ENCODE measurements at regions of chr1 and their contacts with region 1.

Region 1: DNA sequence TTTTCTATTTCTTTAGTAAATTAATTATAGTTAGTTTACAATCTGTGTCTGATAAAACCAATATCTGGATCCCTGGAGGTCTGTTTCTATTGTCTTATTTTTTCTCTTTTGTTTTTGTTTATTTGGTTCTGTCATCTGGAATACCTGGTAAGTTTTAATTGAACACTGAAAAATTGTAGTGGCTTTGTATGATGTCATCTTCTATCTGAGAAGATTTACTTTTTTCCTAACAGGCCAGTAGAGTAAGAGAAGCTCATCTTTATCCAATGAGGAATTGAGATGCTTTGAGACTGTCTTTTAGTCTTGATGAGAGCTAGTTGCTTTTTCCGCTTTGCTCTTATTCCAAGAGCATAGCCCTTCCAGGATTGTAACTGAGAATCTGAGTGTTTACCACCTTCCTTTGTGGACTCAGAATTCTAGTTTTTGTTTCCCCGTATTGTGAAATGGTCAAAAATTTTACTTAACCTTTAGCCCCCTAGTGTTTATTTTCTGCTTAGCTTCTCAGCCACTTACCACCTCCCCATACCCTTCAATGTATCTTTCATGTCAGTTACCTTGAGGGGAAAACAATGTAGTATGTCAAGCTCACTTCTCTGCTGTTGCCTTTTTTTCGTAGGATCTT is 25.0 kb downstream of the PTGFRN start:
- DNase-seq: no peak
- ATAC-seq: no peak
- H3K4me3 Mint-ChIP-seq: no peak overlapping the region
- H3K27ac Mint-ChIP-seq: peak overlapping the region; percentile 77
- H3K4me1 Mint-ChIP-seq: peaks cover 7% of the 10 kb centered on the region
- H3K27me3 Mint-ChIP-seq: no peaks in the 10 kb centered on the region

Region 2: DNA sequence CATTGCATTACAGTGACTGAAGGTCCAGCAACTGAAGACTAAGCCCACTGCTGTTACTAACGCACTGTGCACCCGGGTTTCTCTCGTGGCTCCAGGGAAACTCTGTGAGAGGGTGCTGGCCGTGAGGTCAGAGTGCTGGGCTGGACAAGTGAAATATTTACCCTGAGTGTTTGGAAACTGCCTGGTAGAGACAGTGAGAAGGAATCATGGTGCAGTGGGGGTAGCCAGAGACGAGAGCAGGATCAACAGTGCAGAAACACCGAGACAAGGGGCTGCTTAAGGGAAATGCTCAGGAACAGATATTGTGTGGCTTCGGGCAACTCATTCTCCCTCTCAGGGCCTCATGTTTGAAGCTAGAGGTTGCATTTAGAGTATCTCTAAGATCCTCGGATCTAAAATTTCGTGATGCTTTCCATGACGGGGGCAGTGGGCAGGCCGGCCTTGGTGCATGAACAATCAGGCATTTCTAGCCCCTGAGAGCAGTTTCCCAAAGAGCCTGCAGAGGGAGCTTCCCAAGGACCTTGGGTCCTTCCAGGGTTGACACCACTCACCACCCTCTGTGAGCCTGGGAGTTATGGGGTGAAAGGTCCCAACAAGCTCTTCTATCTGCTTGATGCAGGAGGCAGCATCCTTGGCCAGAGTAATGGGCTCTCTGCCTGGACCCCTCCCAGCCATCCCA is 170.8 kb before region 1 on chr1:
- CTCF ChIA-PET with region 1: interaction called, 3 read pairs
- POLR2A ChIA-PET with region 1: interaction called, 5 read pairs
- intact Hi-C with region 1: loop called in 1 of 2 experiments (anchors 5 kb)
- DNase-seq: peak; percentile 83
- ATAC-seq: peak; percentile 6
- H3K4me3 Mint-ChIP-seq: peak overlapping the region; percentile 93
- H3K27ac Mint-ChIP-seq: peak overlapping the region; percentile 100
- H3K4me1 Mint-ChIP-seq: peaks cover 92% of the 10 kb centered on the region
- H3K27me3 Mint-ChIP-seq: no peaks in the 10 kb centered on the region

Region 3: DNA sequence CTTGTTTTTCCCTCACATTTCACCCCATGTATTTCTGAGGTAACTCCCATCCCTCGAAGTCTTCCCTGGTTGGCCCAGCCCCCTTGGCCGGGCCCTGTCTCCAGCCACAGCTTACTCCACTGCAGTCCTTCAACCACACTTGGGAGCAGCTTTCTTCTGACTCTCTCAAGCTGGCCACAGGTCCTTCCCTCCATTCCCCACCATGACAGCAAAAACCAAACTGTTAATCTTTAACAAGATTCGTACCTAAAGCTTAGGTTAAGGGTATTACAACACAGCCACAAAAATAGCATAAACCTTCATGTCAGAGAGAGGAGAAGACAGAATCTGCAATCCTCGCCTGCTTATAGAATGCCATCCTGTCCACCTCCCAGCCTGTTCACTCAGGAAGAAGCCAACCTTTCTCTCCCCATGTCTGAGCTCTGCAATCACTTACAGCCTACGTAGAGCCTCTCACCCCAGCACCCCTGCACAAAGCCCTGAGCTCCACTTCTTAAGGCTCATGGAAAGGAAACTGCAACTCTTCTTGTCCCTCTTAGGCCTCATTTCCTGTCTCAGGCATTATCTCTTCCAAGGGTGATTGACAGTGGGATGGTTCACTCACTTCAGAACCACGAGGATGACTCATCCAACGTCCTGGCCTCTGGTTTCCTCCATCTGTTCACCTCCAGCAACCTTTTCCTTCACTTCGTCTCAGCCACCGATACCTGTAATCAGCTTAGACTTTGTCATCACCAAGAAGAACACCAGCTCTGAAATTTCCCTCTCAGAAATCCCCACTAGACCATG is 107.7 kb before region 1 on chr1:
- CTCF ChIA-PET with region 1: interaction called, 3 read pairs
- POLR2A ChIA-PET with region 1: interaction called, 4 read pairs
- intact Hi-C with region 1: loop called in 1 of 2 experiments (anchors 1 kb)
- DNase-seq: peak; percentile 87
- ATAC-seq: peak; percentile 90
- H3K4me3 Mint-ChIP-seq: peak overlapping the region; percentile 77
- H3K27ac Mint-ChIP-seq: peak overlapping the region; percentile 97
- H3K4me1 Mint-ChIP-seq: peaks cover 69% of the 10 kb centered on the region
- H3K27me3 Mint-ChIP-seq: no peaks in the 10 kb centered on the region

Region 4: GRCh38 chr1:116873680-116874271 is 60.9 kb before region 1 on chr1:
- CTCF ChIA-PET with region 1: interaction called, 4 read pairs
- POLR2A ChIA-PET with region 1: no interaction called
- intact Hi-C with region 1: loop called (anchors 2 to 5 kb)
- DNase-seq: peak; percentile 52
- ATAC-seq: peak; percentile 73
- H3K4me3 Mint-ChIP-seq: no peak overlapping the region
- H3K27ac Mint-ChIP-seq: peak overlapping the region; percentile 5
- H3K4me1 Mint-ChIP-seq: peaks cover 33% of the 10 kb centered on the region
- H3K27me3 Mint-ChIP-seq: no peaks in the 10 kb centered on the region

Region 5: GRCh38 chr1:116902032-116902738 is 32.5 kb before region 1 on chr1:
- CTCF ChIA-PET with region 1: no interaction called
- POLR2A ChIA-PET with region 1: no interaction called
- intact Hi-C with region 1: loop called in 1 of 2 experiments (anchors 2 kb)
- DNase-seq: no peak
- ATAC-seq: no peak
- H3K4me3 Mint-ChIP-seq: no peak overlapping the region
- H3K27ac Mint-ChIP-seq: no peak overlapping the region
- H3K4me1 Mint-ChIP-seq: no peaks in the 10 kb centered on the region
- H3K27me3 Mint-ChIP-seq: no peaks in the 10 kb centered on the region

Region 6: DNA sequence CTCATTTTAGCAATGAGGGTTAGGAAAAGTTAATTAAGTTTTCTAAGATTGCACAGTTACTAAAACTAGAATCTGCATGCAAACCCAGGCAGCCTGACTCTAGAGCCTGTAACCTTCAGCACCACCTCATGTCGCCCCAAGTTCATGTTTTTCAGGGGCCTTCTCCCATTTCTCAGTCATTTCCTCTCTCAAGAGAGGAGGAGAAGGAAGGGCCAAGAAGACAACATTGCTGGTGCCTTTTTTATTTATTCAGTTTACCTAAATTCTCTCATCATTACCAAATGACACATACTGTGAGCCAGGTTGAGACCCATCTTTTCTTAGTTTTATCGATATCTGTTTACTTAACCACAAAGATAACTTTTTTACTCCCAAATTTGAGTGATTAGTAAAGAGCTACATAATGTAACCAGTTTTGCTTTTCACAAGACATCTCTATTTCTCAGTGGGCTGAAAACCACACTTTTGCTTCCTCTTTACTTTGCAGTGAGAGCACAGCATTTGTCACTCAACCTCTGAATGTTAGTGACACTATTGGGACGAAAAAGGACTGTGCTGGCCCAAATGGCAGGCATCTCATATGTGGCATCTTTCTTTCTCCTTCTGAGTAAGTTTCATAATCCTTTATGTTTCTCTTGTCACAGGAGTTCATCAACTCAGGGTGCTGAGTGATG is 66.7 kb after region 1 on chr1 and contains the start of gene CD101:
- CTCF ChIA-PET with region 1: interaction called, 4 read pairs
- POLR2A ChIA-PET with region 1: no interaction called
- intact Hi-C with region 1: loop called (anchors 1 to 5 kb)
- DNase-seq: peak; percentile 70
- ATAC-seq: peak; percentile 95
- H3K4me3 Mint-ChIP-seq: peak within 1 kb of the TSS; percentile 3
- H3K27ac Mint-ChIP-seq: peak within 1 kb of the TSS; percentile 66
- H3K4me1 Mint-ChIP-seq: peaks cover 53% of the 10 kb centered on the region
- H3K27me3 Mint-ChIP-seq: peaks cover 3% of the 10 kb centered on the region
- total RNA-seq, gene CD101: 0.30 to 0.60 TPM

Region 7: GRCh38 chr1:117067533-117068370 is 133.1 kb after region 1 on chr1:
- CTCF ChIA-PET with region 1: no interaction called
- POLR2A ChIA-PET with region 1: no interaction called
- intact Hi-C with region 1: no loop called
- DNase-seq: peak; percentile 65
- ATAC-seq: peak; percentile 65
- H3K4me3 Mint-ChIP-seq: no peak overlapping the region
- H3K27ac Mint-ChIP-seq: no peak overlapping the region
- H3K4me1 Mint-ChIP-seq: peaks cover 36% of the 10 kb centered on the region
- H3K27me3 Mint-ChIP-seq: no peaks in the 10 kb centered on the region